ENCODE measurements at regions of chr11 and their contacts with region 1.

Region 1: DNA sequence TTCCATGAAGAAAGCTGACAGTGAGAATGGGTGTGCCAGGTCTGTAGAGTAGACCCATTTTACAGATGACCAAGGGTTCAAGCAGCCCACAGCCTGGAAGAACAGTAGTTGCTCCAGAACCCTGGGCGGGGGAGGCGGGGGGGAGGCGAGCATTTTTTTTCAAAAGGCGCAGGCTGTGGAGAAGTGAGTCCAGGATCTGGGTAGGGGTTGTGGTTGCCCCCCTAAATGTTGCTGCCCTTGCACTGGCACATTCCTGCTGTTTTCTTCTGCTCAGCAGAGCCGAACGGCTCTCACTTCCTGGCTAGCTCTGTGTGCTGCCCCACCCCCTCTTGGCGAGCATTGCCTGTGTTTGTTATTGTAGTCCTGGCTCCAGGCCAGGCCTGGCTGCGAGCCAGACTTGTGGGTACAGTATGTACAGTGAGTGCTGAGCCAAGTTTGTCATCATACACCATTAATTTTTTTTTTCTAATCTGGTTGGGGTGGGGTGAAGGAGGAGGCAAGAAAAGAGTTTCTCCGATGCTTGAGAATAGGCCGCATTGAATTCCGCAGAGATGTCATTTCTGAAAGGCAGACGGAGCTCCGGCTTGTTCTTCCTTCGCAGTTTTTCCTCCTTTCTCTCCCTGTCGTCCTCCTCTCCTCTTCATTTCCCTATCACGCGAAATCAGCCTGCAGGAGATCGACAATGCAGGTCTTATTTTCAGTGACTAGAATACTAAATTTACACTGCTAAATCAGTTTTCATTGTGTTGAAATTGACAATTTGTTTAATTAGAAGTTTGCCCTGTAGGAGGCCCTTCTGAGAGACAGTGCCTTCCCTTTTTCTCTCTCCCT is 100.5 kb downstream of the ZBTB16 start:
- DNase-seq: peak; percentile 96 to 100 (median 98)
- ATAC-seq: peak; percentile 95
- H3K4me3 ChIP-seq: peak overlapping the region in 1 of 2 experiments; percentile 2
- H3K4me3 Mint-ChIP-seq: peak overlapping the region; percentile 68
- H3K27ac ChIP-seq: peak overlapping the region; percentile 25 to 51
- H3K27ac Mint-ChIP-seq: peak overlapping the region; percentile 94
- H3K4me1 ChIP-seq: peaks cover 65% of the 10 kb centered on the region
- H3K4me1 Mint-ChIP-seq: peaks cover 87% of the 10 kb centered on the region
- H3K27me3 ChIP-seq: no peaks in the 10 kb centered on the region
- H3K27me3 Mint-ChIP-seq: no peaks in the 10 kb centered on the region
- CTCF ChIP-seq: no peak

Region 2: GRCh38 chr11:113773416-113774173 is 386.4 kb before region 1 on chr11 and contains the start of gene ZW10:
- CTCF ChIA-PET with region 1: no interaction called
- POLR2A ChIA-PET with region 1: no interaction called
- intact Hi-C with region 1: loop called (anchors 5 to 10 kb)
- DNase-seq: peak; percentile 79 to 96 (median 91)
- ATAC-seq: peak; percentile 98
- H3K4me3 ChIP-seq: peak within 1 kb of the TSS; percentile 89 to 90
- H3K4me3 Mint-ChIP-seq: peak within 1 kb of the TSS; percentile 99
- H3K27ac ChIP-seq: peak within 1 kb of the TSS; percentile 59 to 73
- H3K27ac Mint-ChIP-seq: peak within 1 kb of the TSS; percentile 89
- H3K4me1 ChIP-seq: peaks cover 3% of the 10 kb centered on the region
- H3K4me1 Mint-ChIP-seq: peaks cover 28% of the 10 kb centered on the region
- H3K27me3 ChIP-seq: no peaks in the 10 kb centered on the region
- H3K27me3 Mint-ChIP-seq: no peaks in the 10 kb centered on the region
- CTCF ChIP-seq: peak; percentile 96
- total RNA-seq, gene ZW10: 2.6 to 2.8 TPM

Region 3: DNA sequence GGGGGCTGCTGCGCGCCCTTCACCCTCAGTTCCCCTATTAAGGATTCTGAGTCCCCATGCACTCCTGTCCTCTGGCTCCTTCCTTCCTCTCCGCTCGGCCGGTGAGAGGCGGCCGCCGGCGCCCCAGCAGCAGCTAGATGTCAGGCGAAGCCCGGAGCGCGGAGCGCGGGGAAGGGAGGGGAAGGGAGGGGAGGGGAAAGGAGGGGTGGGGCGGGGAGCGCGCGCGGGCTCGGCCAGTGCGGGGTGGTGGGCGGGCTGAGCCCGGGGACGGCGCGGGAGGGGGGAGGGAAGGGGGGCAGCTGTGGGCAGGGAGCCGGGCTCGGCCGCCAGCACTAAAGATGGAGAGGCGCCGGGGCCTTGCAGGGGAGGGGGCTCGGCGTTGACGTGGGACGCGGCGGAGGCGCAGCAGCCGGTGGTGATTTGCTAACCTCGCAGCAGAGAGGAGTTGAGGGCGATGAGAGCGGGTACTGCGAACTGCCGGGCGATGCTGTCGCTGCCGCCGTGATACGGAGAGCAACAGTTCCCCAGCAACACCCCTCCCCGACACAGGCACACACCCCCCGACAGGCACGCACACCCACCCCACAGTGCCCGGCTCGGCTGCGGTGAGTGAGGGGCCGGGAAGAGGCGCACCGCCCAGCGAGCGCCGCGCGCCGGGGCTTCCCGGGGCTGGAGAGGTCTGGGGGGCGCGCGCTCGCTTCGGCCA is 100.6 kb before region 1 on chr11 and contains the start of gene ZBTB16:
- CTCF ChIA-PET with region 1: interaction called, 16 read pairs
- POLR2A ChIA-PET with region 1: interaction called, 3 read pairs
- intact Hi-C with region 1: loop called (anchors 1 to 5 kb)
- DNase-seq: peak in 8 of 9 experiments; percentile 50 to 79 (median 64)
- ATAC-seq: peak; percentile 67
- H3K4me3 ChIP-seq: peak within 1 kb of the TSS; percentile 56 to 70
- H3K4me3 Mint-ChIP-seq: peak within 1 kb of the TSS; percentile 89
- H3K27ac ChIP-seq: peak within 1 kb of the TSS in 1 of 2 experiments; percentile 31
- H3K27ac Mint-ChIP-seq: peak within 1 kb of the TSS; percentile 79
- H3K4me1 ChIP-seq: peaks cover 21% of the 10 kb centered on the region
- H3K4me1 Mint-ChIP-seq: peaks cover 9% of the 10 kb centered on the region
- H3K27me3 ChIP-seq: peaks cover 3 to 14% of the 10 kb centered on the region in 2 experiments
- H3K27me3 Mint-ChIP-seq: peaks cover 21% of the 10 kb centered on the region
- CTCF ChIP-seq: no peak
- total RNA-seq, gene ZBTB16: 15.3 to 18.3 TPM

Region 4: GRCh38 chr11:114099392-114100178 is 60.4 kb before region 1 on chr11:
- CTCF ChIA-PET with region 1: no interaction called
- POLR2A ChIA-PET with region 1: no interaction called
- intact Hi-C with region 1: loop called in 1 of 2 experiments (anchors 10 kb)
- DNase-seq: peak in 1 of 9 experiments; percentile 16
- ATAC-seq: peak; percentile 67
- H3K4me3 ChIP-seq: no peak overlapping the region
- H3K4me3 Mint-ChIP-seq: no peak overlapping the region
- H3K27ac ChIP-seq: no peak overlapping the region
- H3K27ac Mint-ChIP-seq: peak overlapping the region; percentile 49
- H3K4me1 ChIP-seq: peaks cover 20% of the 10 kb centered on the region
- H3K4me1 Mint-ChIP-seq: peaks cover 50% of the 10 kb centered on the region
- H3K27me3 ChIP-seq: no peaks in the 10 kb centered on the region
- H3K27me3 Mint-ChIP-seq: no peaks in the 10 kb centered on the region
- CTCF ChIP-seq: no peak

Region 5: DNA sequence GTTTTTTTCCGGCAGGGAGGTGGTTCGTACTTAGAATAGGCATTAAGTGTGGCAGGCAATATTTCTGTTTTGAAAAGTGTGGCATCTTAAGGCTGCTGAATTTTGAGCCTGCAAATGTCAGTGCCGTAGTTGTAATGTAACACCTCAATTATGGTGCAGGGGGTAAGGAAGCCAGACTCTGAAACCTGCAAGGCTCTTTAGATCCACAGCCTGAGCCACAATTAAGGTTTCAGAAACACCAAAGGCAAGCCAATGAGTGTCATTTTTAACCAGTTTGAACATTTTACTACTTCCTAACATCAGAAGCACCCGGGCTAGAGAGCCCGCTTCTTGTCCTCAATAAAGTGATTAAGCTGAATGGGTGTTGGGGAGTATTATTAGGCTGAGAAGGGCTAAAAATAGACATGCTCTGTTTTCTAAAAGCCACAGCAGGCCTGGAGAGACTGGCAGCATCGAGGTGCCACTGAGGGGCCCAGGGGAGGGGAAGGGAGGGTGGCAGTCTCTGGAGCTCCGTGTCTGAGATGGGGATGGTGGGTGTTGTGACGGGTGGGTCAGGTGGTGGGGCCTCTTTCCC is 12.9 kb after region 1 on chr11:
- CTCF ChIA-PET with region 1: interaction called, 11 read pairs
- POLR2A ChIA-PET with region 1: interaction called, 41 read pairs
- intact Hi-C with region 1: loop called in 1 of 2 experiments (anchors 1 kb)
- DNase-seq: peak in 2 of 9 experiments; percentile 43 to 66
- ATAC-seq: peak; percentile 75
- H3K4me3 ChIP-seq: no peak overlapping the region
- H3K4me3 Mint-ChIP-seq: peak overlapping the region; percentile 48
- H3K27ac ChIP-seq: peak overlapping the region; percentile 21 to 63
- H3K27ac Mint-ChIP-seq: peak overlapping the region; percentile 94
- H3K4me1 ChIP-seq: peaks cover 73% of the 10 kb centered on the region
- H3K4me1 Mint-ChIP-seq: peaks cover 84% of the 10 kb centered on the region
- H3K27me3 ChIP-seq: no peaks in the 10 kb centered on the region
- H3K27me3 Mint-ChIP-seq: no peaks in the 10 kb centered on the region
- CTCF ChIP-seq: no peak

Region 6: DNA sequence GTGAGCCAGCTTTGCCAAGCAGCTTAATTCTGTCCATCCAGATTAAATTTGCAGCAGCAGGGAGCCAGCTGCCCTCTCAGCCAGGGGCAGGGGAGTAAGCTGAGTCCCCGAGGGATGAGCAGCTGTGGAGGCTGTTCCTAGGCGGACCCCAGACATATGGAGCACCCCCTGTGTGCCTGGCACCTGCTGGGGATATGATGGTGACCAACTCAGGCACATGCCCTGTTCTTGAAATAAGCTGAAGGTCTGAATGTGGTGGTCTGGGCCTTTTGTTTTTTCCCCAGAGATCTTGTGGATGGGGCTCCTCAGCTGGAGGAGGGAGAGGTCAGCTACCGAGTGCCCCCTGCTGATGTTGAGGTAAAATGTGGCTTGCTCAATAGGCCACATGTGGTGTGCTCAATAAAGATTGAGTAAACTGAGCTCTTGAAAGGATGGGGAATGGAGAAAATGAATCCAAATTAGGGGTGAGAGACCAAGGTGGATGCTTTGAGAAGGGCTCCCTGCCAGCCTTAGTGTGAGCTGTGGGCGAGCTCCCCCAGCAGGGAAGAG is 32.9 kb after region 1 on chr11:
- CTCF ChIA-PET with region 1: interaction called, 10 read pairs
- POLR2A ChIA-PET with region 1: interaction called, 13 read pairs
- intact Hi-C with region 1: loop called in 1 of 2 experiments (anchors 1 kb)
- DNase-seq: peak in 2 of 9 experiments; percentile 24 to 31
- ATAC-seq: no peak
- H3K4me3 ChIP-seq: no peak overlapping the region
- H3K4me3 Mint-ChIP-seq: no peak overlapping the region
- H3K27ac ChIP-seq: no peak overlapping the region
- H3K27ac Mint-ChIP-seq: no peak overlapping the region
- H3K4me1 ChIP-seq: no peaks in the 10 kb centered on the region
- H3K4me1 Mint-ChIP-seq: peaks cover 44% of the 10 kb centered on the region
- H3K27me3 ChIP-seq: no peaks in the 10 kb centered on the region
- H3K27me3 Mint-ChIP-seq: no peaks in the 10 kb centered on the region
- CTCF ChIP-seq: no peak

Measured in CD8-positive, alpha-beta T cell (primary cell).